ENCODE measurements at regions of chr2 and their contacts with region 1.

Region 1: GRCh38 chr2:16303273-16303577 is 362.4 kb downstream of the CYRIA start:
- DNase-seq: no peak
- H3K4me3 ChIP-seq: no peak overlapping the region
- H3K27ac ChIP-seq: no peak overlapping the region
- H3K4me1 ChIP-seq: no peaks in the 10 kb centered on the region
- H3K27me3 ChIP-seq: no peaks in the 10 kb centered on the region
- CTCF ChIP-seq: no peak
- EP300 ChIP-seq: no peak
- POLR2A ChIP-seq: no peak

Region 2: DNA sequence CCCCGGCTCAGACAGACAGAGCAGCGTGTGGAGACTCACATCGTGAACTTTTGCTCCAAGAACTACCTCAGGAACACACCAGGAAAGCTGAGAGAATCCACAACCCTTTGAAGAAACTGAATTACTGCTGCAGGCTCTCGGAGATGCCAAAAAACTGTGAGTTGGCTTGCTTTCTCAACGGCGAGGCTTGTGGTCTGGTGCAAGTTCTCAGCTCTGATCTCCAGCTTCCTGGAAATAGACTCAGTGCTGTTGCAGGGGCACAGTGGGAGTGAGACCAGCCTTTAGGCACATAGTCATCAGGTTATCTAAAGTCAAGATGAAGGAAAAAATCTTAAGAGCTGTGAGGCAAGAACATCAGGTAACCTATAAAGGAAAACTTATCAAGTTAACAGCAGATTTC is 1944.4 kb before region 1 on chr2:
- in situ Hi-C with region 1: no loop called
- intact Hi-C with region 1: loop called (anchors 5 kb)
- DNase-seq: no peak
- H3K4me3 ChIP-seq: no peak overlapping the region
- H3K27ac ChIP-seq: no peak overlapping the region
- H3K4me1 ChIP-seq: no peaks in the 10 kb centered on the region
- H3K27me3 ChIP-seq: no peaks in the 10 kb centered on the region
- CTCF ChIP-seq: no peak
- EP300 ChIP-seq: no peak
- POLR2A ChIP-seq: no peak

Region 3: GRCh38 chr2:15984368-15985255 is 318.6 kb before region 1 on chr2:
- in situ Hi-C with region 1: no loop called
- intact Hi-C with region 1: no loop called
- DNase-seq: no peak
- H3K4me3 ChIP-seq: no peak overlapping the region
- H3K27ac ChIP-seq: no peak overlapping the region
- H3K4me1 ChIP-seq: no peaks in the 10 kb centered on the region
- H3K27me3 ChIP-seq: no peaks in the 10 kb centered on the region
- CTCF ChIP-seq: no peak
- EP300 ChIP-seq: no peak
- POLR2A ChIP-seq: no peak

Region 4: DNA sequence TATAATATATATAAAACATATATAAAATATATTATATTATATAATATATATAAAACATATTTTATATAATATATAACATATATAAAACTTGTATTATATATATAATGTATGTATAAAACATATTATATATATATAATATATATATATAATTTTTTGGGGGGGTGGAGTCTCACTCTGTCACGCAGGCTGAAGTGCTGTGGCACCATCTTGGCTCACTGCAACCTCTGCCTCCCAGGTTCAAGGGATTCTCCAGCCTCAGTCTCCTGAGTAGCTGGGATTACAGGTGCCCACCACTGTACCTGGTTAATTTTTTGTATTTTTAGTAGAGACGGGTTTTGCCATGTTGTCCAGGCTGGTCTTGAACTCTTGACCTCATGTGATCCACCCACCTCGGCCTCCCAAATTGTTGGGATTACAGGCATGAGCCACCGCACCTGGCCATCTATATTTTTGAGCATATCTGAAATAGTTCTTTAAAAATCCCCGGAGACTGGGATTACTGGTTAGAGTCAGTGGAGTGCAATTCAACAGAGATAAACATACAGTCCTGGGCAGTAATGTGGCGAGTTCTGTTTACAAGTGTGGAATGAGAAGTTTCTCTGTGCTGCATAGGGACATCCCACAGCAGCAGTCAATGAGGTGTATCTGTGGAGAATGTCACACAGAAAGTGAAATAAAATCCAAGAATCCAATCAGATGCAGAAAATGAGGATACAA is 154.4 kb before region 1 on chr2:
- in situ Hi-C with region 1: no loop called
- intact Hi-C with region 1: no loop called
- DNase-seq: no peak
- H3K4me3 ChIP-seq: no peak overlapping the region
- H3K27ac ChIP-seq: no peak overlapping the region
- H3K4me1 ChIP-seq: no peaks in the 10 kb centered on the region
- H3K27me3 ChIP-seq: no peaks in the 10 kb centered on the region
- CTCF ChIP-seq: no peak
- EP300 ChIP-seq: no peak
- POLR2A ChIP-seq: no peak

Region 5: DNA sequence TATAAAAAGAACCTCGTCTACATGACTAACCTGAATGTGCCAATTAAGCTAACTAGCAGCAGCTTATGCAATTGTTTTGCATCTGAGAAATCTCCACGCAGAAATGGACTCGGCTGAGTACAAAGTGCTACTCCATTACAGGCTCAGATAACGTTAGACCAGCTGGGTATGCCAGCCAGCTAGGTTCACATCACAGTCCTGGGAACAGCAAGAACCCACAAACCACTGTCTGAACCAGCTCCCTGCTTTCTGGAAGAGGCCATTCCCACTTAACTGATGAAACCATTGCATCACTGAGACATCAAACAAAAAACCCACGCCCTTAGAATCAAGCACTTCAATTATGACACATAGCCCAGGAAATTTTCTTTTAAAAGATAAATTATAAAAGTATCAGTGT is 159.7 kb after region 1 on chr2:
- in situ Hi-C with region 1: no loop called
- intact Hi-C with region 1: no loop called
- DNase-seq: no peak
- H3K4me3 ChIP-seq: no peak overlapping the region
- H3K27ac ChIP-seq: no peak overlapping the region
- H3K4me1 ChIP-seq: no peaks in the 10 kb centered on the region
- H3K27me3 ChIP-seq: no peaks in the 10 kb centered on the region
- CTCF ChIP-seq: no peak
- EP300 ChIP-seq: no peak
- POLR2A ChIP-seq: no peak

Region 6: DNA sequence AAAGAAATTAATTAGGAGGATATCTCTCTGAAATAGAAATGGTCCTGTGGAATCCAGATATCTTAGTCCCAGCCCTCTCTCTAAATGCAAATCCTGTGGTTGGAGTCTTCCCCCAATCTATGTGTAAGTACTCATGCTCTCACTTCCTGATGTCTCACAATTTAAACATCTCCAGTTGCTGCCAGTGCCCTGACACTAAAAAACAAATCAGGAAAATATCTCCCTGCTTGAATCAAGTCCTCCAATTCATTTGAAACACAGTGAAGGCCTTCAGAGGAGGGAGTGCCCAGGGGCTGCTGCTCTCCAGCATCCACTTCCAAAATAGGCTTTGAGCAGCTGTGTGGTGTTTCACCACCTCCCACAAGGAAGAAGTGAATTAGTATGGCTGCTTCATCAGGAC is 801.2 kb after region 1 on chr2:
- in situ Hi-C with region 1: no loop called
- intact Hi-C with region 1: no loop called
- DNase-seq: no peak
- H3K4me3 ChIP-seq: no peak overlapping the region
- H3K27ac ChIP-seq: no peak overlapping the region
- H3K4me1 ChIP-seq: no peaks in the 10 kb centered on the region
- H3K27me3 ChIP-seq: no peaks in the 10 kb centered on the region
- CTCF ChIP-seq: no peak
- EP300 ChIP-seq: no peak
- POLR2A ChIP-seq: no peak